K562 (cell line): ENCODE measurements at regions of chr1 and their contacts with region 1.

Region 1: GRCh38 chr1:213015099-213016050 is at the start of gene ANGEL2:
- DNase-seq: peak; percentile 91 to 100 (median 94)
- ATAC-seq: peak; percentile 91
- H3K4me3 ChIP-seq: peak within 1 kb of the TSS; percentile 72
- H3K27ac ChIP-seq: peak within 1 kb of the TSS; percentile 65
- H3K4me1 ChIP-seq: peaks cover 15 to 22% of the 10 kb centered on the region in 2 experiments
- H3K27me3 ChIP-seq: no peaks in the 10 kb centered on the region
- CTCF ChIP-seq: no peak
- EP300 ChIP-seq: peak; percentile 22; the same call in 1 of the 2 replicates
- POLR2A ChIP-seq: peak; percentile 85
- RAD21 ChIP-seq: no peak
- polyA plus RNA-seq, gene ANGEL2: 6.8 to 10.9 TPM

Region 2: GRCh38 chr1:212987702-212988322 is 27.6 kb before region 1 on chr1:
- CTCF ChIA-PET with region 1: no interaction called
- POLR2A ChIA-PET with region 1: no interaction called
- in situ Hi-C with region 1: no loop called
- intact Hi-C with region 1: no loop called
- DNase-seq: no peak
- ATAC-seq: no peak
- H3K4me3 ChIP-seq: no peak overlapping the region
- H3K27ac ChIP-seq: no peak overlapping the region
- H3K4me1 ChIP-seq: no peaks in the 10 kb centered on the region
- H3K27me3 ChIP-seq: peaks cover 8 to 17% of the 10 kb centered on the region in 2 experiments; a peak in 4 of 5 replicates
- CTCF ChIP-seq: no peak
- EP300 ChIP-seq: no peak
- POLR2A ChIP-seq: no peak
- RAD21 ChIP-seq: no peak

Region 3: GRCh38 chr1:213035573-213035972 is 20.2 kb after region 1 on chr1:
- CTCF ChIA-PET with region 1: no interaction called
- POLR2A ChIA-PET with region 1: interaction called, 11 read pairs
- in situ Hi-C with region 1: no loop called
- intact Hi-C with region 1: no loop called
- DNase-seq: no peak
- ATAC-seq: no peak
- H3K4me3 ChIP-seq: no peak overlapping the region
- H3K27ac ChIP-seq: no peak overlapping the region
- H3K4me1 ChIP-seq: no peaks in the 10 kb centered on the region; a peak in 3 of 5 replicates
- H3K27me3 ChIP-seq: no peaks in the 10 kb centered on the region
- CTCF ChIP-seq: no peak
- EP300 ChIP-seq: no peak
- POLR2A ChIP-seq: no peak
- RAD21 ChIP-seq: no peak